ENCODE measurements at regions of chr11 and their contacts with region 1.

Region 1: DNA sequence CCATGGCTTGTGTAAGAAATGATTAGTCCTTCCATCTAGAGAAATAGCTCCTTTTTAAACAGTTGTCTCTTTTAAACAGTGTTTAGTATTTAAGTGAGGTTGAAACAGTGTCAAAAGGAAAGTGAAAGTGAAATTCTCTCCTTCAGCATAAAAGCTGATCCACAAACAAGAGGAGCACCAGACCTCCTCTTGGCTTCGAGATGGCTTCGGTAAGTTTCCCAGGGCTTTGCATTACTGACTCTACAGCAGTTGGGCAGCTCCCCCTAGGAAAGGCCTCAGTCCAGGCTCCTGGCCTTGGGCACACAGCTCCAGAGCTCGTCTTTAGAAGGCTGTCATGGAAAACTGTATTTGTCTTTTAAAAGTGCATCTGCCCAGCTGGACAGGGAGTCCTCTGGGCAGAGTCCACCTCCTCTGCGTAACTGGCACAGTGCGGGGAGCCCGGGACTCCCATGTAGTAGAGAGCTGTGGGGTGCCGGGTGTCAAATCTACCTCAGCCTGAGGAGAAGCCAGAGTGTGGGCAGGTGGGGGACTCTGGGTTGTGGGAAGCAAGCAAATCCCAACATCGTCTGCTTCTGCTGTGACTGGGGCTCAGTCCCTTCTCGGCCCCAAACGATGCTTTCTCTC is at the start of gene PLAAT4:
- DNase-seq: peak; percentile 44
- ATAC-seq: peak; percentile 65
- H3K4me3 Mint-ChIP-seq: peak within 1 kb of the TSS; percentile 81
- H3K27ac Mint-ChIP-seq: peak within 1 kb of the TSS; percentile 94
- H3K4me1 Mint-ChIP-seq: peaks cover 81% of the 10 kb centered on the region
- H3K27me3 Mint-ChIP-seq: no peaks in the 10 kb centered on the region
- total RNA-seq, gene PLAAT4: 16.8 to 18.7 TPM

Region 2: GRCh38 chr11:63375434-63375833 is 161.3 kb before region 1 on chr11:
- CTCF ChIA-PET with region 1: no interaction called
- POLR2A ChIA-PET with region 1: no interaction called
- intact Hi-C with region 1: no loop called
- DNase-seq: no peak
- ATAC-seq: no peak
- H3K4me3 Mint-ChIP-seq: no peak overlapping the region
- H3K27ac Mint-ChIP-seq: no peak overlapping the region
- H3K4me1 Mint-ChIP-seq: no peaks in the 10 kb centered on the region
- H3K27me3 Mint-ChIP-seq: peaks cover 23% of the 10 kb centered on the region

Region 3: DNA sequence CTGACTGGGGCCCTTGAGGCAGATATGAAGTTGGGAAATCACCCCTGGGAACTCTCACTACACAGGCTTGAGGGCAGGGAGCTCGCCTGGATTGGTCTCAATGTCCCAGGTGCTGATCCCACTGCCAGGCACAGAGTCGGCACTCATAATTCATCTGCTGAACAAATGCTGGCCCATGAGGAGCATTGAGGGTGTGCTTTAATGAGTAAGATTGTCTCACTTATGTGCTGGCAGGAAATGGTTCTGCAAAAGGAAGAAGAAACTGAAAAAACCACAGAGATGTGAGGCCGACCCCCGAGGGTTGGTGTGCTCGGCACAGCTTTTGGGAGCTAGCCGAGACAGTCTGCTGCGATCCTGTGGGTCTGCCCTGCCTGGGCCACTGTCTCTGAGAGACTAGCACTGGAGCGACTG is 17.0 kb after region 1 on chr11:
- CTCF ChIA-PET with region 1: interaction called, 5 read pairs
- POLR2A ChIA-PET with region 1: interaction called, 8 read pairs
- intact Hi-C with region 1: loop called (anchors 1 to 2 kb)
- DNase-seq: peak; percentile 73
- ATAC-seq: peak; percentile 92
- H3K4me3 Mint-ChIP-seq: peak overlapping the region; percentile 60
- H3K27ac Mint-ChIP-seq: peak overlapping the region; percentile 91
- H3K4me1 Mint-ChIP-seq: peaks cover 57% of the 10 kb centered on the region
- H3K27me3 Mint-ChIP-seq: no peaks in the 10 kb centered on the region

Region 4: GRCh38 chr11:63671322-63672155 is 134.8 kb after region 1 on chr11 and contains the start of gene ATL3:
- CTCF ChIA-PET with region 1: no interaction called
- POLR2A ChIA-PET with region 1: no interaction called
- intact Hi-C with region 1: loop called in 1 of 2 experiments (anchors 1 kb)
- DNase-seq: peak; percentile 96
- ATAC-seq: peak; percentile 86
- H3K4me3 Mint-ChIP-seq: peak within 1 kb of the TSS; percentile 85
- H3K27ac Mint-ChIP-seq: peak within 1 kb of the TSS; percentile 90
- H3K4me1 Mint-ChIP-seq: peaks cover 45% of the 10 kb centered on the region
- H3K27me3 Mint-ChIP-seq: no peaks in the 10 kb centered on the region
- total RNA-seq, gene ATL3: 18.9 to 25.7 TPM

Measured in activated CD4-positive, alpha-beta T cell treated with anti-CD3 and anti-CD28 coated beads for 36 hours (primary cell).